Right ventricle myocardium superior (tissue), 1 donor: ENCODE measurements at regions of chr20 and their contacts with region 1.

Region 1: DNA sequence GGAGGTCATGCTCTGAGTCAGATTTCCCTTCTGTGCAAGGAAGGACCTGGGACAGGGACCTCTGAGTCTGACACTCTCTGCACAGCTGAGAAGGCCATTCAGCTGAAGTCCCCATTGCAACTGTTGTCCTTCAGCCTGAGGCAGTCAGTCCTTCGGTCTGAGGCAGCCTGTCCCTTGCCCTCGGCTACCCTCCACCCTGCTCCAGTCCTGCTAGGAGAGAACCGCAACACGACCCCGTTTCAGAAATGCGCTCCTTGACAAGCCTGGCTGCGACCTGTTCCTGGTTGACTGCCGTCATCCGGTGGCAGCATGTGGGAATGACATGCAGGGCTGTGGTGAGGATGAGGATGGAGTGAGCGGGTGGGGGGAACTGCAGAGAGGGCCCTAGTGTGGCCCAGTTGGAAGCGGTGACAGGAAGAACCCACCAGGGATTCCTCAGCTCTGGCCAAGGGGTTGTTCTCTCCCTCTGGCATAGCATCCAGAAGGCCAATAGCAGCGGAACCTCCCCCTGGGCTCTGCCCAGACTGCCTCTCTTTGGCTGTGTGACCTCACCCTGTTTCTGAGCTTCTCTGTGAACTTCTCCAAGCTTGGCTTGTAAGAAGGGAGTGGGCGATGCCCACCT is 40.3 kb upstream of the ANGPT4 start:
- DNase-seq: peak; percentile 81
- ATAC-seq: peak; percentile 93

Region 2: DNA sequence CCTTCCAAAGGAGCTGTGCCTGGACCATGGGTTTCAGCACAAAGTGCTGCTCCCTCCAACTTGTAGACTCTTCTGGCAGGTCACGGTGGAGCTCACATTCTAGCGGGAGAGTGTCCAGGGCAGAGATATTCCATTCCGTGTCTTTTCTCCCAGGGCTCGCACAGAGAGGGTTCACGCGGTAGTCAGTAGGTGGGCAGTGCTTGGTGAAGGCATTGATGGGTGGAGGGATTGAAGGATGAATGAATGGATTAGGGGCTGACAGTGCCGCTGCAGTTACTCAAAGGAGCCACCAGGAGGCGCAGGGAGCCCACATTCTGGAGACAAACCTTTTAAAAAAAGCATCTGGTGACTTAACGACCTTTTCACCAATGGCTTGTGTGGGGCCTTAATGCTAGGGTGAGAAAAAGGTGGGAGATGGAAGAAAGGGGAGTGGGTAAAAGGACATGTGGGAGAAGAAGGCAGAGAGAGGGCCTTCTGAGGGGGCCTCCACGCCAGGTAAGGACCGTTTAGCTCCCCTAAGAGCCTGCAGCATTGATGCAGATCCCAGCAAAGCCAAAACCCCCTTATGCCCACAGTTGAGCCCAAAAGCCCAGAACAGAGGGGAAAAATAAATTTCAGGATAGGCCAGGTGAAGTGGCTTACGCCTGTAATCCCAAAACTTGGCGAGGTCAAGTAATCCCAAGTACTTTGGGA is 140.4 kb before region 1 on chr20:
- intact Hi-C with region 1: loop called (anchors 1 kb)
- DNase-seq: peak; percentile 73
- ATAC-seq: peak; percentile 61

Region 3: GRCh38 chr20:872855-873521 is 83.5 kb before region 1 on chr20:
- intact Hi-C with region 1: no loop called
- DNase-seq: no peak
- ATAC-seq: no peak